Activated T-helper 2 cell treated with anti-CD3 and anti-CD28 coated beads, Interferon-gamma antibody, Interleukin-2, Interleukin-4, amounts not matched to agents 10 μg/mL and 5 μg/mL and 100 μg/mL, durations not matched to agents 14 hours and 24 hours and 36 hours (primary cell): ENCODE measurements at regions of chr3 and their contacts with region 1.

Region 1: GRCh38 chr3:72523429-72524151 is 324.7 kb downstream of the SHQ1 start:
- DNase-seq: no peak
- H3K4me3 Mint-ChIP-seq: no peak overlapping the region
- H3K27ac Mint-ChIP-seq: peak overlapping the region; percentile 51
- H3K4me1 Mint-ChIP-seq: peaks cover 44% of the 10 kb centered on the region
- H3K27me3 Mint-ChIP-seq: no peaks in the 10 kb centered on the region

Region 2: GRCh38 chr3:72458358-72458757 is 65.2 kb before region 1 on chr3:
- intact Hi-C with region 1: loop called (anchors 2 kb)
- DNase-seq: no peak
- H3K4me3 Mint-ChIP-seq: no peak overlapping the region
- H3K27ac Mint-ChIP-seq: no peak overlapping the region
- H3K4me1 Mint-ChIP-seq: peaks cover 28% of the 10 kb centered on the region
- H3K27me3 Mint-ChIP-seq: no peaks in the 10 kb centered on the region

Region 3: GRCh38 chr3:72473156-72473555 is 50.4 kb before region 1 on chr3:
- intact Hi-C with region 1: loop called (anchors 2 kb)
- DNase-seq: no peak
- H3K4me3 Mint-ChIP-seq: no peak overlapping the region
- H3K27ac Mint-ChIP-seq: peak overlapping the region; percentile 84
- H3K4me1 Mint-ChIP-seq: peaks cover 47% of the 10 kb centered on the region
- H3K27me3 Mint-ChIP-seq: no peaks in the 10 kb centered on the region

Region 4: DNA sequence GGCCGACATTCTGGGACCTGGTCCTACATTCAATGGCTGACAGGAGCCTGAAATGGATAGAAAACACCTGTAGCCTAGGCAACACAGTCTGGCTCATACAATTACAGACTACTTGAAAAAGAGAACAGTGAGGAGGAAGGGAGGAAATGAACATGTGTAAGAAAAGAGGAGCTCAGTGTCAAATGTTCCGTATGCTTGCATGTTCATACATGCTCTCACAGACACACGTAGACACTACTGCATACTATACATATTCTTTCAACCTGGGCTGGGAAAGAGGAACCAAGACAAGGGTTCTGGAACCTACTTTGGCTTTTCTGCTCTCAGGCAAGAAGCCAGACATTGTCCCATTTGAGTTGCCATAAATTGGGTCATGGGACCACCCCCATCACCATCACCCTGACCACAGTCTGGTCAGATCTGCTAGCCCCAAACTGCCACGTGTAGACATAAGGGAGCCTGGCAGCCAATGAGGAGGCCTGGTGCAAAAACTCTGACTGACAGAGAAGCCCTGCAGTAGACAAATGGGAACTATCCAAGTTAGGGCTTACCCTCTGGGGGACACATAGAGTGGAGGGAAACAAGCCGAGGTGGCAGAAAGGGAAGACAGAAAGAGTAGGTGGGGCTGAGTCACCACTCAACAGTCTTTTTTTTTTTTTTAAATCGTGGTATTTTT is 14.6 kb after region 1 on chr3:
- intact Hi-C with region 1: loop called (anchors 1 kb)
- DNase-seq: no peak
- H3K4me3 Mint-ChIP-seq: no peak overlapping the region
- H3K27ac Mint-ChIP-seq: peak overlapping the region; percentile 60
- H3K4me1 Mint-ChIP-seq: peaks cover 38% of the 10 kb centered on the region
- H3K27me3 Mint-ChIP-seq: no peaks in the 10 kb centered on the region